GM12878 (cell line): ENCODE measurements at regions of chr15 and their contacts with region 1.

Region 1: GRCh38 chr15:89472785-89473256 is 23.6 kb downstream of the RHCG start:
- DNase-seq: no peak
- ATAC-seq: peak; percentile 99
- H3K4me3 ChIP-seq: no peak overlapping the region
- H3K27ac ChIP-seq: no peak overlapping the region
- H3K4me1 ChIP-seq: no peaks in the 10 kb centered on the region
- H3K27me3 ChIP-seq: peaks cover 0 to 6% of the 10 kb centered on the region in 2 experiments; a peak in 2 of 4 replicates
- CTCF ChIP-seq: peak; percentile 84 to 92 (median 91)
- EP300 ChIP-seq: no peak
- POLR2A ChIP-seq: no peak
- RAD21 ChIP-seq: peak; percentile 91

Region 2: GRCh38 chr15:88849376-88850072 is 623.3 kb before region 1 on chr15:
- CTCF ChIA-PET with region 1: no interaction called
- POLR2A ChIA-PET with region 1: no interaction called
- RAD21 ChIA-PET with region 1: no interaction called
- SMC1A ChIA-PET with region 1: no interaction called
- in situ Hi-C with region 1: no loop called
- intact Hi-C with region 1: no loop called
- DNase-seq: no peak
- ATAC-seq: no peak
- H3K4me3 ChIP-seq: no peak overlapping the region
- H3K27ac ChIP-seq: no peak overlapping the region
- H3K4me1 ChIP-seq: no peaks in the 10 kb centered on the region
- H3K27me3 ChIP-seq: no peaks in the 10 kb centered on the region; a peak in 1 of 4 replicates
- CTCF ChIP-seq: no peak
- EP300 ChIP-seq: no peak
- POLR2A ChIP-seq: no peak
- RAD21 ChIP-seq: no peak

Region 3: GRCh38 chr15:89352476-89352875 is 120.3 kb before region 1 on chr15:
- CTCF ChIA-PET with region 1: interaction called, 87 read pairs
- POLR2A ChIA-PET with region 1: no interaction called
- RAD21 ChIA-PET with region 1: interaction called, 15 read pairs
- SMC1A ChIA-PET with region 1: interaction called, 17 read pairs
- in situ Hi-C with region 1: loop called (anchors 5 kb)
- intact Hi-C with region 1: no loop called
- DNase-seq: no peak
- ATAC-seq: peak; percentile 23; the same call in 2 of the 3 replicates
- H3K4me3 ChIP-seq: no peak overlapping the region
- H3K27ac ChIP-seq: no peak overlapping the region
- H3K4me1 ChIP-seq: no peaks in the 10 kb centered on the region
- H3K27me3 ChIP-seq: peaks cover 5 to 7% of the 10 kb centered on the region in 2 experiments
- CTCF ChIP-seq: no peak
- EP300 ChIP-seq: no peak
- POLR2A ChIP-seq: no peak
- RAD21 ChIP-seq: no peak

Region 4: DNA sequence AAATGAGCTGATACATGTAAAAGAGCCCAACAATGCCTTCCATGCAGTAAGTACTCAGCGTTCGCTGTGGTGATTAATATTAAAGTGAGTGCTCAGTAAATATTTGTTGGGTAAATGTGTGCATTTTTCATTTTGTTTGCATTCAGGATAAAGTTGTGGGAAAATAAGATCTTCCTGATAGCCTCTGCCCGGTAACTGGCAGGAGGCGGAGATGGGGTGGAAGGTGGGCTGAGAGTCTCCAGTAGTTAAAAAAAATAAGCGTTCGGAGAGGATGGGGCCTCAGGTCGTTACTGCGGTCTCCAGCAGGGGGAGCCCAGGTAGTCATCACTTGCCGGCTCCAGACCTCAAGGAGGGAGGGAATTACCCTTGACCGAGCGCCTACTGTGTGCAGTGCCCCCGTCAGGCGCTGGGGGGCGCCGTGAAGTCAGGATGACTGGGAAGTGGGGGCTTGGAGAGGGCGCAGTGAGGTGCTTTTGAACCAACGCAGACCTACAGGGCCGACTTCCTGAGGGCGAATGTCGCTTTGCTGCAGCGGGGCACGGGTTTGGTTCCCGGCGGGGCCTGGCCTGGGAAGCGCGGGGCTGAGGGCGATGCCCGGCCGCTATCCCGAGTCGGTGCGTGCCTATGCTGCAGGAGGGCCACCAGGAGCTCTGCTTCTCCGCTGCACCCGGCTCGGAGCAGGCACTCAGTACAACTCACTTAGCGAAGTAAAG is 56.5 kb before region 1 on chr15:
- CTCF ChIA-PET with region 1: interaction called, 19 read pairs
- POLR2A ChIA-PET with region 1: no interaction called
- RAD21 ChIA-PET with region 1: interaction called, 5 read pairs
- SMC1A ChIA-PET with region 1: interaction called, 3 read pairs
- in situ Hi-C with region 1: no loop called
- intact Hi-C with region 1: loop called (anchors 2 kb)
- DNase-seq: no peak
- ATAC-seq: peak; percentile 90
- H3K4me3 ChIP-seq: no peak overlapping the region
- H3K27ac ChIP-seq: no peak overlapping the region
- H3K4me1 ChIP-seq: no peaks in the 10 kb centered on the region
- H3K27me3 ChIP-seq: peaks cover 6 to 8% of the 10 kb centered on the region in 2 experiments; a peak in 3 of 4 replicates
- CTCF ChIP-seq: peak; percentile 93 to 99 (median 97)
- EP300 ChIP-seq: no peak
- POLR2A ChIP-seq: no peak
- RAD21 ChIP-seq: peak; percentile 55

Region 5: DNA sequence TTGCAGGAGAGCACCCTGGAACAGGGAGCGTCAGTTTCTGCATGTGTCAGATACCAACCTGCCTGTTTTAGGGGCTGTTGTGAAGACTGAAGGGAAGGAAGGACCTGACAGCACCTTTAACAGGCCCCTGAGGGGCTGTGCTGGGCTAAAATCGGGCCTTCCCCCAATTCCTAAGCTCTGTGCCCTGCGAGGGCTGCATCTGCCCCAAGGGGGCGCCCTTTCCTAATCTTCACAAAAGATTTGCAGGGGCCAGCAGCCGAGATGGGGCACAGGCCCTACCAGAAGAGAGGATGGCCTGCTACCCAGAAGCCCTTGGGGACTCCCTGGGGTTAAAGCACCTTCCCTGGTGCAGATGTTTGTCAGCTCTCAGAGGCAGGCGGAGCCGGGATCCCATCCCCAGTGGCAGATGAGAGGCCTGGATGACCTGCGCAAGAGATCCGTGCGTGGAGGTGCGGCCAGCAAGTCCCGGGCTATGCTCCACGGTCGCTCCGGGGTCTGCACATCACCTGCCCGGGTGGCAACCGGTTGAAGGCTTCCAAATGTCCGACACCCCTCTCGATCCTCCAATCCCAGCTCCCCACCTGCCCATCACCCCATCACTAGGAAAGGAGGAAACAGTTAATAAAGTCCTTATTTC is 30.0 kb before region 1 on chr15:
- CTCF ChIA-PET with region 1: interaction called, 58 read pairs
- POLR2A ChIA-PET with region 1: no interaction called
- RAD21 ChIA-PET with region 1: interaction called, 24 read pairs
- SMC1A ChIA-PET with region 1: interaction called, 6 read pairs
- in situ Hi-C with region 1: no loop called
- intact Hi-C with region 1: loop called (anchors 2 kb)
- DNase-seq: no peak
- ATAC-seq: peak; percentile 70
- H3K4me3 ChIP-seq: no peak overlapping the region
- H3K27ac ChIP-seq: no peak overlapping the region
- H3K4me1 ChIP-seq: peaks cover 17% of the 10 kb centered on the region
- H3K27me3 ChIP-seq: no peaks in the 10 kb centered on the region
- CTCF ChIP-seq: peak; percentile 56 to 72 (median 71)
- EP300 ChIP-seq: no peak
- POLR2A ChIP-seq: no peak
- RAD21 ChIP-seq: peak; percentile 56